ENCODE measurements at regions of chr4 and their contacts with region 1.

Region 1: GRCh38 chr4:142126890-142127497 is 490.6 kb downstream of the IL15 start:
- DNase-seq: peak; percentile 87
- ATAC-seq: peak; percentile 68
- H3K4me3 ChIP-seq: no peak overlapping the region
- H3K27ac ChIP-seq: no peak overlapping the region
- H3K4me1 ChIP-seq: peaks cover 17% of the 10 kb centered on the region
- H3K27me3 ChIP-seq: no peaks in the 10 kb centered on the region
- CTCF ChIP-seq: peak; percentile 96

Region 2: DNA sequence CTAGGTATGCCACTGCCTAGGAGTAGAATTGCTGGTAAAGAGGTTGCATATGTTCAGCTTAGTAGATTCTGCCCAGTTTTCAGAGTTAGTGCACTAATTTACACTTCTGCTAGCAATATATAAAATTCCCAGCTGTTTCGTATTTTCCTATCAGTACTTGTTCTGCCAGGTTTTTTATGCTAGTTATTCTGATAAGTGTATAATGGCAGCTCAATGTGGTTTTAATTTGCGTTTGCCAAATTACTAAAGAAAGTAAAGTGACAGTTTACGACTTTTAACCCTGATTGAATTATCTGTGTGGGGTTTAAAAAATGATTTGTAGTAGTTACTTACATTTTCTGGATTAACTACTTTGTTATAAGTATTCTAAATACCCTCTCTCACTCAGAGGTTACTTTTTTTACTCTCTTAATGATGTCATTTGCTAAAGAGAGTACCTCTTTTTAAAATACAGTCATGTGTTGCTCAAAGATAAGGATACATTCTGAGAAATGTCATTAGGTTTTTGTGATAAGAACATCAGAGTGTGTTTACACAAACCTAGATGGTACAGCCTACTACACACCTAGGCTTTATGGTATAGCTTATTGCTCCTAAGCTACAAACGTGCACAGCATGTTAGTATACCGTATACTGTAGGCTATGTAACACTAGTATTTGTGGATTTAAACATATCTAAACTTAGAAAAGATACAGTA is 127.4 kb before region 1 on chr4:
- CTCF ChIA-PET with region 1: no interaction called
- POLR2A ChIA-PET with region 1: no interaction called
- intact Hi-C with region 1: no loop called
- DNase-seq: no peak
- ATAC-seq: no peak
- H3K4me3 ChIP-seq: no peak overlapping the region
- H3K27ac ChIP-seq: no peak overlapping the region
- H3K4me1 ChIP-seq: no peaks in the 10 kb centered on the region
- H3K27me3 ChIP-seq: no peaks in the 10 kb centered on the region
- CTCF ChIP-seq: no peak

Region 3: GRCh38 chr4:142191901-142192300 is 64.9 kb after region 1 on chr4:
- CTCF ChIA-PET with region 1: no interaction called
- POLR2A ChIA-PET with region 1: no interaction called
- intact Hi-C with region 1: no loop called
- DNase-seq: peak; percentile 6
- ATAC-seq: no peak
- H3K4me3 ChIP-seq: no peak overlapping the region
- H3K27ac ChIP-seq: no peak overlapping the region
- H3K4me1 ChIP-seq: peaks cover 13% of the 10 kb centered on the region
- H3K27me3 ChIP-seq: no peaks in the 10 kb centered on the region
- CTCF ChIP-seq: no peak

Region 4: DNA sequence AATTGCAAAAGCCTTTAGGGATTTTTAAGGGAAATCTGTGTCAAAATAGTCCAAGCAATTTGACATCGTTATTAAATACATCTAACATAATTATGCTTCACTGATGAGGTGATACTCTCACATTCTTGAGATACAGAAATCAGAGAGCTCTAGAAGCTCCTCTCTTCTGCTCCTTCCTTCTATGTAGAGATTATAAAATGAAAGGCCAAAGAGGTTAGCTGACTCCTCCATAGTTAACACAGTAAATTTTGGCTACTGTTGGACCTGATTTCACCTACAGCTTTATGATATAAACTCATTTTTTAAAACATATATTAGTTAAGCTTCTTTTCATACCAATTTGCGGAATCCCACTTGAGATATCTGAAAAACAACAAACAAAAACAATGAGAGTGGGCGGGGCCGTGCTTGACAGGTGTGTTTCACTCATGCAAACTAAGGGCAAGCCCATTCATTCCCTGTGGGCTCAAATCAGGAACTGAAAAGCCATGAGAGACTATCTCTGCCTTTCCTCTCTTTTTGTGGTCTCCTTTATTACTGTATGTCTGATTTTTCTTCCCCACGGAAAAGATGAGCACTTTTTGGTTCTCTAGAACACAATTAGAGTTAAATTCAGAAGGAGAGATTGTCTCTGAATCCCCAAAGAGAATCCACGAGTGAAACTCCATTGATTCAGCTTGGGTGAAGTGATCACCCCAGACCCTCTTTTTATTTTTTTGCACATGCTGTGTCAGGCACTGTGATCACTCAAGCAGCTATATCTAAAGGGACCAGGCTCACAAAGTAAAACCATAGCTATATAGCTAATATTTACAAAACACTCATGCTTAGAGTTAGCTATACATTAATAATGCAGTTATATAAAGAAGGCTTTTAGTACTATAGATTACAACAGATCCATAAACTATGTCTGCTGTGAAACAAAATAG is 75.7 kb after region 1 on chr4:
- CTCF ChIA-PET with region 1: no interaction called
- POLR2A ChIA-PET with region 1: no interaction called
- intact Hi-C with region 1: loop called (anchors 5 kb)
- DNase-seq: no peak
- ATAC-seq: no peak
- H3K4me3 ChIP-seq: no peak overlapping the region
- H3K27ac ChIP-seq: no peak overlapping the region
- H3K4me1 ChIP-seq: no peaks in the 10 kb centered on the region
- H3K27me3 ChIP-seq: no peaks in the 10 kb centered on the region
- CTCF ChIP-seq: no peak

Region 5: GRCh38 chr4:142516670-142517526 is 389.9 kb after region 1 on chr4:
- CTCF ChIA-PET with region 1: no interaction called
- POLR2A ChIA-PET with region 1: no interaction called
- intact Hi-C with region 1: loop called (anchors 1 kb)
- DNase-seq: peak; percentile 76
- ATAC-seq: peak; percentile 45
- H3K4me3 ChIP-seq: no peak overlapping the region
- H3K27ac ChIP-seq: peak overlapping the region; percentile 16
- H3K4me1 ChIP-seq: peaks cover 47% of the 10 kb centered on the region
- H3K27me3 ChIP-seq: no peaks in the 10 kb centered on the region
- CTCF ChIP-seq: no peak

Measured in PC-3 (cell line).